ENCODE measurements at regions of chr19 and their contacts with region 1.

Region 1: DNA sequence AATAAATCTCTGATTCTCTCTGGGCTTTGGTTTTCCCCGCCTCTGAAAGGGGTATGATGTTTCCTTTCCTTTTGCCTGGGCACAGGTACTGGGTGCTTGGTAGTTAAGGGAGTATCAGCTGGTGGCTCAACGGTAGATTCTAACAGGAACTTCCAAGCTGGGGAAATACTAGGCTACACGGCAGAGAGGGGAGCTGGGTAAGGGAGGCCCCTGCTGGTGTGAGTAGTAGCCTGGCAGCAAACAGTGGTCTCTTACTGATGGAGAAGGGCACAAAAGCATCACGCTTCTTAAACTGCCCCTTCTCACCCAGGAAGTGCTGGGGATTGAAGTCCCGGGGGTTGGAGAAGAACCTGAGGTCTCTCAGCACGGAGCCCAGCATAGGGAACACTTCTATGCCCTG is 26.9 kb upstream of the CYP2A7 start:
- DNase-seq: peak; percentile 86

Region 2: DNA sequence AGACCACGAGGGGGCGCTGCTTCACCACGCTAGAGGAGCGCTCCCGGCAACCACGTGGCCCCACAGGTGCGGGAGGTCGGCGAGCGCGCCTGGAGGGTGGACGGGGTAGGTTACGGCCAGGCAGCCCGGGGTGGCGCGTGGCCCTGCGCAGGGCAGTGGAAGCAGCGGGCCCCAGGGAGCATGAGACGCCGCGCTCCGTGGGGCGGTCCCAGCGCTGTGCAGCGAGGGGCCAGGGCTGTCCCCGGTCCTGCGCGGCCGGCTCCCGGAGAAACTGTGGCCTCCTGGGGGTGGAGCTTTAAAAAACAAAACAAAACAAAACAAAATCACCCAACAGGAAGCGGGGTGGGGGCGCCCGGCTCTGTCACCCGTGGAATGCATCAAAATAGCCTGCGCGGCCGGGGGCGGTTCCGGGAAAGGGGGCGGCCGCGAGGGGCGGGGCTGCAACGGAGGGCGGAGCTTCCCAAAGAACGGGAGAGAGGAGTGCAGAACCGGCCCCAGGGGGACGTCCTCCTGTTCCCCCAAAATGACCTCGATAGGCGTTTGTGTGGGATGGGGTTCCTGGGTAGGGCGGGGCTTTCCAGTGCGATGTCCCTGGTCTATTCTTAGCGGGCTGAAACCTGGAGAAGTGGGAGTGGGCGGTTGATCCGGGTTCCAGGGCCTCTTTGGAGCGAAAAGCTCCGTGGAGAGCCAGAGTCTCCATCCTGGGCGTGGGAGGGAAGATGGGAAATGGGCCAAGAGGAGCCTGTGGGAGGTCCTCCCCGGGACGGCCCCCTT is 245.9 kb before region 1 on chr19:
- in situ Hi-C with region 1: loop called (anchors 25 kb)
- DNase-seq: peak; percentile 91

Measured in KBM-7 (cell line).